Activated CD8-positive, alpha-beta T cell treated with anti-CD3 and anti-CD28 coated beads for 36 hours (primary cell): ENCODE measurements at regions of chr1 and their contacts with region 1.

Region 1: GRCh38 chr1:66924756-66925557 is at the starts of genes DNAI4 and MIER1:
- DNase-seq: peak; percentile 98
- ATAC-seq: peak; percentile 95
- H3K4me3 Mint-ChIP-seq: peak within 1 kb of the TSS; percentile 92
- H3K27ac Mint-ChIP-seq: peak within 1 kb of the TSS; percentile 97
- H3K4me1 Mint-ChIP-seq: peaks cover 47% of the 10 kb centered on the region
- H3K27me3 Mint-ChIP-seq: no peaks in the 10 kb centered on the region
- CTCF ChIP-seq: no peak
- total RNA-seq, gene DNAI4: 1.0 to 1.7 TPM
- total RNA-seq, gene MIER1: 39.8 to 41.8 TPM

Region 2: DNA sequence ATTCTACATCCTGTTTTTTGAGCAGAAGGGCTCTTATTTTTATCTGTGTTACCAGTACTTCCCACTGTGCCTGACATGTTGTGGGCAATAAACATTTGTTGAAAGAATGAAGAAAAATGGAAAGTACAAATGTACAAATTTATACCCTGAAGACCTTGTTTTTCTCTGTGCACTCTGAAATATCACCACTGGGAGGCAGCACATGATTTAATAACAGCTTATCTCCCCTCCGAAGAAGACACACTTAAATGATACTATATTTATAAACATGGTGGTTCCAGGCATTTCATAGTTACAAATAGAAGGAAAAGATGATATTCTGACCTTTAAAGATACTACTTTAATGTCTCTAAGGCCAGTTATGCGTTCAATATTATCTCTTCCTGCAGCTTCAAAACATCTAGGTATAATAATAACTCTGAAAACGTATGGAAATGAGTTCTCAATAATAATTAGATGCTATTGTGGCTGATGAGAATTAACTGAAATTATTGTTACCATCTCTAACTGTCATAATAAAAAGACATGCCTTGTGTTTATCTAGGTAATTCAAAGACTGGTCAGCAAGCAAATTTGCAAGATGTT is 159.9 kb before region 1 on chr1:
- CTCF ChIA-PET with region 1: interaction called, 4 read pairs
- POLR2A ChIA-PET with region 1: interaction called, 3 read pairs
- intact Hi-C with region 1: loop called (anchors 5 kb)
- DNase-seq: peak; percentile 78
- ATAC-seq: peak; percentile 76
- H3K4me3 Mint-ChIP-seq: no peak overlapping the region
- H3K27ac Mint-ChIP-seq: no peak overlapping the region
- H3K4me1 Mint-ChIP-seq: peaks cover 16% of the 10 kb centered on the region
- H3K27me3 Mint-ChIP-seq: no peaks in the 10 kb centered on the region
- CTCF ChIP-seq: peak; percentile 86